Motor neuron (in vitro differentiated cells): ENCODE measurements at regions of chr2 and their contacts with region 1.

Region 1: GRCh38 chr2:165390875-165391274 is 78.6 kb upstream of the CSRNP3 start:
- ATAC-seq: peak in 4 of 8 experiments; percentile 15 to 53 (median 40)
- H3K4me3 ChIP-seq: no peak overlapping the region
- H3K27ac ChIP-seq: no peak overlapping the region
- H3K4me1 ChIP-seq: peaks cover 0 to 2% of the 10 kb centered on the region in 2 donors

Region 2: GRCh38 chr2:165528691-165529090 is 137.8 kb after region 1 on chr2:
- in situ Hi-C with region 1: no loop called
- ATAC-seq: no peak
- H3K4me3 ChIP-seq: no peak overlapping the region
- H3K27ac ChIP-seq: no peak overlapping the region
- H3K4me1 ChIP-seq: peaks cover 0 to under 1% of the 10 kb centered on the region in 2 donors

Region 3: GRCh38 chr2:165573534-165574461 is 182.9 kb after region 1 on chr2:
- in situ Hi-C with region 1: no loop called
- ATAC-seq: peak in 7 of 8 experiments; percentile 19 to 93 (median 90)
- H3K4me3 ChIP-seq: peak overlapping the region; percentile 37 to 46 (median 39)
- H3K27ac ChIP-seq: peak overlapping the region; percentile 46 to 62
- H3K4me1 ChIP-seq: peaks cover 7 to 19% of the 10 kb centered on the region in 2 donors

Region 4: GRCh38 chr2:165778653-165779451 is 388.0 kb after region 1 on chr2:
- in situ Hi-C with region 1: loop called in 1 of 9 experiments (anchors 10 kb)
- ATAC-seq: peak in 3 of 8 experiments; percentile 66 to 91 (median 78)
- H3K4me3 ChIP-seq: no peak overlapping the region
- H3K27ac ChIP-seq: no peak overlapping the region
- H3K4me1 ChIP-seq: peaks cover 0 to 3% of the 10 kb centered on the region in 2 donors